GM13977 (cell line): ENCODE measurements at regions of chr1 and their contacts with region 1.

Region 1: GRCh38 chr1:161706482-161707347 is at the start of gene FCRLA:
- DNase-seq: peak; percentile 59
- CTCF ChIP-seq: no peak

Region 2: DNA sequence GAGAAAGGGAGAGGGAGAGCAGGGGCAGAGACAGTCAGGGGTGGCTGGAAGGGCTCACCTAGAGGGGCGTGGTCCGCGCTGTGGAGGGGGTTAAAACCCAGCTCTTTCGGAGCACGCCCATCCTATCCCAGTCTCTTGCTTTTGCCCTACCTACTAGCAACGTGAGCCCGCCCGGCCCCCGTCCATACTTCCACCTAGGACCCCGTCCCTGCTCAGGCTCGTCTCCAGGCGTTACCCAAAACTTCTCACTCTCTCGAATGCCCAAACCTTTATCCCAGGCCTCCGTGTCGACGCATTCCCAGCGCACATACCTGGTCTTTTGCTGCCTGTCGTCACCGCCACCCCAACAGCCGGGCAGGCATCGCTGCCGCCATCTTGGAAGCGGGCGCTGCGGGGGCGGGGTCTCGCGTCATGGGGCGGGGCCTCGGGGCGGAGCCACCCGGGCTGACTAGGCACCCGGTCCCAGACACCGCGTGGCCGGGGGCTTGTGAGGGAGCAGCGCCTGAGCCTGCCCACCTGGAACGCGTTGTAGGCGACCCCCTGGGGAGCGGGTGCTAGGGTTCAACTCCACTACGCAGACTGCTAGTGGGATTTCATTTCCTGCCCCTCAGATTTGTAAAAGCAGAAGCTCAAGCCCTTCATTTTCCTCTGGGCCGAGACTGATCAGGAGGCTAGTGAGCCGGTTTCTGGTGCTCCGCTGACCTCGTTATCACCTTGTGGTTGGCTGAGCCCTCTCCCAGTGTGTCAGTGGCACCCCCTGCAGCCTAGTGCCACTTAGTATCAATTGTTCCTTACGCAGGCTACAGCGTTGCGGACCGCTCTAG is 529.4 kb before region 1 on chr1 and contains the start of gene B4GALT3:
- in situ Hi-C with region 1: loop called (anchors 25 kb)
- DNase-seq: peak; percentile 95
- CTCF ChIP-seq: no peak

Region 3: DNA sequence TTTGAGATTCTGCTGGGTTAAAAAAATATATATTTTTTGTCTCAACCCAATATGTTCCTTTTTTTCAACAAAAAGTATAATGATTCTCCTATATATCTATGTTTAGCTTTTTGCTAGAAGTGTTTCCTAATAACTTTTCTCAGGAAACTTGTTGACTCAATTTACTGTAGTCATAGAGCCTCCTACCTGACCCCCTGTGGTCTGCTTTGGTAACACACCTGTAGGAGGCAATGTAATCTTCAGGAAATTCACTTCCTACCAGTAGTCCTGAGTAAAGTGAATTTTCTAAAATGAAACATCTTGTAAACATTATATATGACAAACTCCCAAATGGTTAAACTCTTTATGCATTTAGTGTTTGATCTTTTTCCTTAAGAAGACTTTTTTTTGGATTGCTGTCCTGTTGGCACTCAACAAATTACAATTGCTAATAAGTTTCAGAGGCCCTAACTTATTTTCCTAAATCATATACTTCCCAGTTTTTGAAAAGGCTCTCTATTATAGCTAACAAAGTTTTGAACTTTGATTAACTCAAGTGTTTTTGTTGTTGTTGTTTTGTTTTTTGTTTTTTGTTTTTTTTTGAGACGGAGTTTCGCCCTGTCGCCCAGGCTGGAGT is 198.7 kb after region 1 on chr1:
- in situ Hi-C with region 1: no loop called
- DNase-seq: peak; percentile 19
- CTCF ChIP-seq: peak; percentile 46